ENCODE measurements at regions of chrX and their contacts with region 1.

Region 1: DNA sequence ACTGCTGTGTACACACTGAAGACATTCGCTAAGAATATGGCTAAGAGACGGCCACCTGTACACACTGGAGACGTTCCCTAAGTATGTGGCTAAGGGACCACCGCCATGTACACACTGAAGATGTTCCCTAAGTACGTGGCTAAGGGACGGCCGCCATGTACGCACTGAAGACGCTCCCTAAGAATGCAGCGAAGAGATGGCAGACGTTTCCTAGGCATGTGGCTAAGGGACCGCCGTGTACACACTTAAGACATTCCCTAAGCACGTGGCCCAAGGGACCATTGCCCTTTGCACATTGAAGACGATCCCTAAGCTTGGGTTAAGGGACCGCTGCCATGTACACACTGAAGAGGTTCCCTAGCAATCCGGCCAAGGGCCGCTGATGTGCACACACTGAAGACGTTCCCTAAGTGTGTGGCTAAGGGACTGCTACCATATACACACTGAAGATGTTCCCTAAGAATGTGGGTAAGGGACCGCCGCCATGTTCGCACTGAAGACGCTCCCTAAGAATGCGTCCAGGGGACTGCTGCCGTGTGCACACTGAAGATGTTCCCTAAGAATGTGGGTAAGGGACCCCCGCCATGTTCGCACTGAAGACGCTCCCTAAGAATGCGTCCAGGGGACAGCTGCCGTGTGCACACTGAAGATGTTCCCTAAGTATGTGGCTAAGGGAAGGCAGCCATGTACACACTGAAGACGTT is 36.7 kb downstream of the DHRSX start:
- DNase-seq: peak; percentile 99
- ATAC-seq: peak; percentile 71
- H3K4me3 ChIP-seq: peak overlapping the region; percentile 47 to 57
- H3K27ac ChIP-seq: peak overlapping the region; percentile 92
- H3K4me1 ChIP-seq: peaks cover 10 to 51% of the 10 kb centered on the region in 2 experiments; a peak in 3 of 4 replicates
- H3K27me3 ChIP-seq: no peaks in the 10 kb centered on the region
- CTCF ChIP-seq: no peak
- POLR2A ChIP-seq: no peak
- RAD21 ChIP-seq: no peak

Region 2: DNA sequence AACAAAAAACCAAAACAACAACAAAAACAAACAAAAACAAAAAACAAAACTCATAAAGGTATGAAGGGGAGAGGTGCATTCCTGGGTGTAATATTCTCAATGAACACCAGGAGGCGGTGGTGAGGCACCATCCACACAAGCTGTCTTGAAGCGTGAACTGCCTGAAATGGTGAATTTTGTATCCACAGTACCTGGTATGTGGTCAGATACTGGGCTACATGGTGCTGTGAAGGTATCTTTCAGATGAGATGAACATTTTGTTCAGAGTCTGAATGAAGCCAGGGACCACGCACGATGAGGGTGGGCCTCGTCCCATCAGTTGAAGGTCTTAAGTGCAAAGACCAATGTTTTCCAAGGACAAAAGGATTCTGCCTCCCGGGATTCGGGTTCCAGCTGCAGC is 790.8 kb before region 1 on chrX:
- CTCF ChIA-PET with region 1: no interaction called
- POLR2A ChIA-PET with region 1: no interaction called
- RAD21 ChIA-PET with region 1: no interaction called
- intact Hi-C with region 1: loop called (anchors 1 kb)
- DNase-seq: peak; percentile 46
- ATAC-seq: peak; percentile 77
- H3K4me3 ChIP-seq: no peak overlapping the region
- H3K27ac ChIP-seq: no peak overlapping the region
- H3K4me1 ChIP-seq: no peaks in the 10 kb centered on the region
- H3K27me3 ChIP-seq: no peaks in the 10 kb centered on the region
- CTCF ChIP-seq: peak; percentile 29 to 80 (median 72); a peak in 5 of 6 replicates
- POLR2A ChIP-seq: no peak
- RAD21 ChIP-seq: peak; percentile 79

Region 3: DNA sequence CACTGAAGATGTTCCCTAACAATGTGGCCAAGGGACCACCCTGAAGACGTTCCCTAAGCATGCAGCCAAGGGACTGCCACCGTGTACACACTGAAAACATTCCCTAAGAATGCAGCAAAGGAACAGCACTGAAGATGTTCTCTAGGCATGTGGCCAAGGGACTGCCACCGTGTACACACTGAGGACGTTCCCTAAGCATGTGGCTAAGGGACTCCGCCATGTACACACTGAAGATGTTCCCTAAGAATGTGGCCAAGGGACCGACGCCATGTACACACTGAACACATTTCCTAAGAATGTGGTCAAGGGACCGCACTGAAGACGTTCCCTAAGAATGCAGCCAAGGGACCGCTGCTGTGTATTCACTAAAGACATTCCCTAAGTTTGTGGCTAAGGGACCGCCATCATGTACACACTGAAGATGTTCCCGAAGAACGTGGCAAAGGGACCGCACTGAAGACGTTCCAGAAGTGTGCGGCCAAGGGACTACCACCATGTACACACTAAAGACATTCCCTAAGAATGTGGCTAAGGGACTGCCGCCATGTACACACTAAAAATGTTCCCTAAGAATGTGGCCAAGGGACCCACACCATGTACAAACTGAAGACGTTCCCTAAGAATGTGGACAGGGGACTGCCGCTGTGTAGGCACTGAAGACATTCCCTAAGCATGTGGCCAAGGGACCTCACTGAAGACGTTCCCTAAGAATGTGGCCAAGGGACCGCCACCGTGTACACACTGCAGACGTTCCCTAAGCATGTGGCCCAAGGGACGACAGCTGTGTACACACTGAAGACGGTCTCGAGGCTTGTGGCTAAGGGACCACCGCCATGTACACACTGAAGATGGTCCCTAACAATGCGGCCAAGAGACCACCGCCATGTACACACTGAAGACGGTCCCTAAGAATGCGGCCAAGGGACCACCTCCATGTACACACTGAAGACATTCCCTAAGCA is 18.2 kb before region 1 on chrX:
- CTCF ChIA-PET with region 1: no interaction called
- POLR2A ChIA-PET with region 1: no interaction called
- RAD21 ChIA-PET with region 1: no interaction called
- intact Hi-C with region 1: loop called (anchors 1 kb)
- DNase-seq: peak; percentile 97
- ATAC-seq: peak; percentile 78
- H3K4me3 ChIP-seq: peak overlapping the region in 1 of 2 experiments; percentile 19; a peak in 1 of 4 replicates
- H3K27ac ChIP-seq: peak overlapping the region; percentile 74
- H3K4me1 ChIP-seq: peaks cover 7 to 32% of the 10 kb centered on the region in 2 experiments
- H3K27me3 ChIP-seq: no peaks in the 10 kb centered on the region
- CTCF ChIP-seq: no peak
- POLR2A ChIP-seq: no peak
- RAD21 ChIP-seq: no peak

Measured in HCT116 (cell line).